H1 (cell line): ENCODE measurements at regions of chr17 and their contacts with region 1.

Region 1: GRCh38 chr17:80959330-80960036 is 32.2 kb upstream of the CHMP6 start:
- DNase-seq: no peak
- H3K4me3 ChIP-seq: no peak overlapping the region
- H3K27ac ChIP-seq: no peak overlapping the region; the same call in 1 of the 2 replicates
- H3K4me1 ChIP-seq: no peaks in the 10 kb centered on the region
- H3K27me3 ChIP-seq: no peaks in the 10 kb centered on the region
- CTCF ChIP-seq: no peak
- EP300 ChIP-seq: no peak
- POLR2A ChIP-seq: no peak
- RAD21 ChIP-seq: no peak

Region 2: DNA sequence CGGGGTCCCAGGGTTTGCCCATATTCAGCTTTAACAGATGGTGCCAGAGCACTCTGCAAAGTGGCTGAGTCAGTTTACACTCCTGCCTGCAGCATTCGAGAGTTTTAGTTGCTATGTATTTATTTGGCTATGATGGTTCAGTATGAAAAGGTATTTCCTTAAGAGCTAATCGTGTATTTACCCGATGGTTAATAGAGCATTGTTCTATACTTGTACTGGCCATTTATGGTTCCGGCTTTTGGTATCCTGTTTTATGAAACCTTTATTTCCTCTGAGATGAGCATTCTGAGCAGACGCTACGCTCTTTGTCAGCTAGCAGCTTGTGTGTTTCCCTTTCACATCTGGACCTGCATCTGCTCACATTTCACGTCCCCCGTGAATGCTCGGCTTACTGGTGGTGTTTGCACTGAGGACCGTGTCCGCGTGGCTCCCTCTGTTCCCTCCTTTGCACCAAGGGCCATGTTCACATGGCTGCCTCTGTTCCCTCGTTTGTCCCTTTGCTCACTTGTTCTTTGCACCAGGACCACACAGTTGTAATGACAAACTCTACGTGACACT is 116.9 kb before region 1 on chr17:
- CTCF ChIA-PET with region 1: no interaction called
- POLR2A ChIA-PET with region 1: no interaction called
- DNase-seq: no peak
- H3K4me3 ChIP-seq: no peak overlapping the region
- H3K27ac ChIP-seq: no peak overlapping the region; the same call in 1 of the 2 replicates
- H3K4me1 ChIP-seq: peaks cover 0 to 10% (median 5%) of the 10 kb centered on the region in 4 experiments; a peak in 6 of 7 replicates
- H3K27me3 ChIP-seq: no peaks in the 10 kb centered on the region
- CTCF ChIP-seq: no peak
- EP300 ChIP-seq: no peak
- POLR2A ChIP-seq: no peak
- RAD21 ChIP-seq: no peak

Region 3: GRCh38 chr17:80866147-80866793 is 93.2 kb before region 1 on chr17:
- CTCF ChIA-PET with region 1: no interaction called
- POLR2A ChIA-PET with region 1: no interaction called
- DNase-seq: peak in 1 of 2 experiments; percentile 83
- H3K4me3 ChIP-seq: no peak overlapping the region
- H3K27ac ChIP-seq: no peak overlapping the region
- H3K4me1 ChIP-seq: peaks cover 0 to 1% (median 0%) of the 10 kb centered on the region in 4 experiments; a peak in 1 of 7 replicates
- H3K27me3 ChIP-seq: no peaks in the 10 kb centered on the region
- CTCF ChIP-seq: peak; percentile 67 to 76 (median 75)
- EP300 ChIP-seq: no peak
- POLR2A ChIP-seq: no peak
- RAD21 ChIP-seq: peak; percentile 51 to 63

Region 4: DNA sequence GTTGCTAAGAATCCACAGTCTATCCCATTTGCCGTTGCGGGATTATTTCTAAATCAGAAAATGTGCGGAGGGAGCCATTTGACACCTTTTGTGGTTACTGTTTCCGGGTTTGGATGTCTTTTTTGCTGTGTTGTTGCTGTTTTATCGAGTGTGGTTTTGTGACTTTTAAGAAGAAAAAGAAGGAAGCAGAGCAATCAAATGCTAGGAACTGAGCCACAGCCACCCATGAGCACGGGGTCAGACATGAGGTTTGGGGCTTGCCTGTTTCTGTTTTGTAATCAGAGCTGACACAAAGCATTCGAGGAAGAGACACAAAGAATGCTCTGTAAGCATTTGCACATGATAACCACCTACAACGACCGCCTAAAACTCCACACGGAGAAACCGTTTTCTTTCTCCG is 20.9 kb before region 1 on chr17:
- CTCF ChIA-PET with region 1: interaction called, 13 read pairs
- POLR2A ChIA-PET with region 1: interaction called, 3 read pairs
- DNase-seq: no peak
- H3K4me3 ChIP-seq: no peak overlapping the region
- H3K27ac ChIP-seq: no peak overlapping the region
- H3K4me1 ChIP-seq: no peaks in the 10 kb centered on the region; a peak in 1 of 7 replicates
- H3K27me3 ChIP-seq: no peaks in the 10 kb centered on the region
- CTCF ChIP-seq: no peak
- EP300 ChIP-seq: no peak
- POLR2A ChIP-seq: no peak
- RAD21 ChIP-seq: no peak

Region 5: GRCh38 chr17:80970044-80970761 is 10.7 kb after region 1 on chr17:
- CTCF ChIA-PET with region 1: interaction called, 16 read pairs
- POLR2A ChIA-PET with region 1: no interaction called
- DNase-seq: no peak
- H3K4me3 ChIP-seq: no peak overlapping the region
- H3K27ac ChIP-seq: no peak overlapping the region
- H3K4me1 ChIP-seq: peaks cover 0 to 3% (median under 1%) of the 10 kb centered on the region in 4 experiments; a peak in 4 of 7 replicates
- H3K27me3 ChIP-seq: no peaks in the 10 kb centered on the region
- CTCF ChIP-seq: peak; percentile 57 to 82 (median 61)
- EP300 ChIP-seq: no peak
- POLR2A ChIP-seq: no peak
- RAD21 ChIP-seq: peak; percentile 59 to 68

Region 6: DNA sequence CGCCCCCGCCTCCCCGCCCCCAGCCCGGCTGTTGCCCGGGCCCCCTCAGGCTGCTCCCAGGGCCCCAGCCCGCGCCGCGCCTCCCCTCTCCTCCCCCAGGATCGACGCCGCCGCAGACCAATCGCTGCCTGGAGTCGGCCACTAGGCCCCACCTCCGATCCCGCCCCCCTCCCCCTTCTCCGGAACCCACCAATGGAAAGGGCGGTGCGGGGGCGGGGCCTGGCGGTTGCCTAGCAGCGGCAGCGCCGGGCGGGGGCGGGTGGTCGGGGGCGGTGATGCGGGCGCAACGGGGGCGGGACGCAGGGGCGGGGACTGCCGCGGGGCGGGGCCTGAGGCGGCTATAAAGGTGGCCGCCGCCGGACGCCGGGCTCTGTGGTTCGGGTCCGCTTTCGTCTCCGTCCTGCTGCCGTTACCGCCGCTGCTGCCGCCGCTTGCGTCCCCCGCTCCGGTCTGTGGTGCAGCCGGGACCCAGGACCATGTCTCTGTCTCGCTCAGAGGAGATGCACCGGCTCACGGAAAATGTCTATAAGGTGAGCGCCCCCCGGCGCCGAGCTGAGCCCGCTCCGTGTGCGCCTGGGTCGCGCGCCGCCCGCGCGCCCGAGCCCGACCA is 75.4 kb after region 1 on chr17 and contains the start of gene BAIAP2:
- CTCF ChIA-PET with region 1: no interaction called
- POLR2A ChIA-PET with region 1: no interaction called
- DNase-seq: peak; percentile 77 to 97
- H3K4me3 ChIP-seq: peak within 1 kb of the TSS; percentile 57 to 97 (median 72)
- H3K27ac ChIP-seq: no peak within 1 kb of the TSS
- H3K4me1 ChIP-seq: peaks cover 0 to 19% (median 9%) of the 10 kb centered on the region in 4 experiments; a peak in 5 of 7 replicates
- H3K27me3 ChIP-seq: peaks cover 0 to 11% (median 5%) of the 10 kb centered on the region in 4 experiments; a peak in 5 of 7 replicates
- CTCF ChIP-seq: 0 out of 4 replicates have a peak, but pooled peaks of 1 of the 3 experiments have one; percentile 3
- EP300 ChIP-seq: no peak
- POLR2A ChIP-seq: peak in 1 of 2 experiments; percentile 98; a peak in 2 of 3 replicates
- RAD21 ChIP-seq: no peak; a peak in 1 of 4 replicates
- total RNA-seq, gene BAIAP2: 18.4 and 22.8 TPM in 2 replicates

Region 7: DNA sequence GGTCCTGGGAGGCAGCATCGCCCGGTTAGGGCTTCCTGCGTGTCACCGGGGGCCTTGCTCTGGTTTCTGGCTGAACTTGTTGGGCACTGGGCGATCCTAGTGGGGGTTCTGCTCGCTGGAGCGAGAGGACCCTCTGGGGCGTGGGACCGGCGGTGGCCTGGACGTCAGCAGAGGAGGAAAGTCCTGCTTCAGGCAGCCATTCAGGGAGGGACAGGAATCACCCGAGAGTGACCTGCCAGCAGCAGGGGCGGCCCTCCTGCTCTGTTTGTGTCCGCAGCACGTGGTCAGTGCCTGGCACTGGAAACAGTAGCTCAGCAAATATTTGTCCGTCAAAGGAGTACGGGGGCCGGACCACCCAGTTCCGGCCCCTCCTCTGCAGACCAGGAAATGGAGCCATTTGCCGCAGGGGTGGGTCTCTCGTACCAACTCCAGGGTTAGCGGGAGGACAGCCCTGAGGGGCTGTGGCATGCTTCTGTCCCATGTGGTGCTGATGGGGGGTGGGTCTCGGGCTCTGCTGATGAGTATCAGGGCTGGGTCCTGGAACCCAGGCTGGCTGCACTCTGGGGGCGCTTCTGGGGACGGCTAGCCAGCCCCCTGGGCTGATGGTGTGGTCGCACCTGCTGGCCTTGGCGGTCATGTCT is 123.8 kb after region 1 on chr17:
- CTCF ChIA-PET with region 1: no interaction called
- POLR2A ChIA-PET with region 1: no interaction called
- DNase-seq: no peak
- H3K4me3 ChIP-seq: no peak overlapping the region
- H3K27ac ChIP-seq: no peak overlapping the region
- H3K4me1 ChIP-seq: no peaks in the 10 kb centered on the region; a peak in 1 of 7 replicates
- H3K27me3 ChIP-seq: no peaks in the 10 kb centered on the region
- CTCF ChIP-seq: no peak
- EP300 ChIP-seq: no peak
- POLR2A ChIP-seq: no peak
- RAD21 ChIP-seq: no peak